Prostate gland (tissue), 2 donors: ENCODE measurements at regions of chr1 and their contacts with region 1.

Region 1: DNA sequence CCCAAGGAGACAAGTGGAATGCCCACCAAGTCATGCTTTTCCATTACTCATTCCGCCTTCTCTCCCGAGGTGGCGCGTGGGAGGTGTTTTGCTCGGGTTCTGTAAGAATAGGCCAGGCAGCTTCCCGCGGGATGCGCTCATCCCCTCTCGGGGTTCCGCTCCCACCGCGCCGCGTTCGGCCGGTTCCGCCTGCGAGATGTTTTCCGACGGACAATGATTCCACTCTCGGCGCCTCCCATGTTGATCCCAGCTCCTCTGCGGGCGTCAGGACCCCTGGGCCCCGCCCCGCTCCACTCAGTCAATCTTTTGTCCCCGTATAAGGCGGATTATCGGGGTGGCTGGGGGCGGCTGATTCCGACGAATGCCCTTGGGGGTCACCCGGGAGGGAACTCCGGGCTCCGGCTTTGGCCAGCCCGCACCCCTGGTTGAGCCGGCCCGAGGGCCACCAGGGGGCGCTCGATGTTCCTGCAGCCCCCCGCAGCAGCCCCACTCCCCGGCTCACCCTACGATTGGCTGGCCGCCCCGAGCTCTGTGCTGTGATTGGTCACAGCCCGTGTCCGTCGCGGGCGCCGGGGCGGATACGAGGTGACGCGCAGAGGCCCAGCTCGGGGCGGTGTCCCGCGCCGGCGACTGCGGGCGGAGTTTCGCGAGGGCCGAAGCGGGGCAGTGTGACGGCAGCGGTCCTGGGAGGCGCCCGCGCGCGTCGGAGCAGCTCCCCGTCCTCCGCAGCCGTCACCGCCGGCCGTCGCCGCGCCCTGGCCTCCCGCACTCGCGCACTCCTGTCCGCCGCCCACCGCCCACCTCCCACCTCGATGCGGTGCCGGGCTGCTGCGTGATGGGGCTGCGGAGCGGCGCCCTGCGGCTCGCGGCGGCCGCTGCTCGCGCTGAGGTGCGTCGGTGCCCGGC is at the start of gene KIF1B:
- DNase-seq: peak; percentile 99
- H3K4me3 ChIP-seq: peak within 1 kb of the TSS; percentile 87 to 93
- H3K27ac ChIP-seq: peak within 1 kb of the TSS; percentile 96 to 99
- H3K4me1 ChIP-seq: peaks cover 3% of the 10 kb centered on the region
- H3K27me3 ChIP-seq: no peaks in the 10 kb centered on the region
- CTCF ChIP-seq: peak; percentile 99 to 100 (median 99)
- POLR2A ChIP-seq: peak; percentile 100
- total RNA-seq, gene KIF1B: 31.3 to 56.8 TPM

Region 2: DNA sequence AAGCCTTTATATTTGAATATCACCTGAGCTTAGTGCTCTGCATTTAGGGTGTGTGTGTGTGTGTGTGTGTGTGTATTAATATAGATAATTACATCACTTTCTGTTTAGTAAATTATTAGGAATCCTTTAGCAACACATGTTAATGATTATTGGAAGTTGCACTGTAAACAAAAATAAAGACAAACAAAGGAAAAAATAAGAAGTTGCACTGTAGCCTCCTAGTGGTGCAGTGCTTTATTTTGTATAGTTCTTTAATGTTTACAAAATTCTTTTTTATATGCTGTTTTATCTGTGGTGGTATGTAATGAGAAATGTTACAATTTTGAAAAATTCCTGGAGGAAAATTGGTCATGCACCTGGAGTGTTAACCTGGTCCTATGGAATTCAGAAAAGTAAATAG is 108.2 kb before region 1 on chr1:
- intact Hi-C with region 1: no loop called
- DNase-seq: no peak
- H3K4me3 ChIP-seq: no peak overlapping the region
- H3K27ac ChIP-seq: no peak overlapping the region
- H3K4me1 ChIP-seq: peaks cover 6% of the 10 kb centered on the region
- H3K27me3 ChIP-seq: no peaks in the 10 kb centered on the region
- CTCF ChIP-seq: peak in 1 of 4 experiments; percentile 17
- POLR2A ChIP-seq: no peak

Region 3: DNA sequence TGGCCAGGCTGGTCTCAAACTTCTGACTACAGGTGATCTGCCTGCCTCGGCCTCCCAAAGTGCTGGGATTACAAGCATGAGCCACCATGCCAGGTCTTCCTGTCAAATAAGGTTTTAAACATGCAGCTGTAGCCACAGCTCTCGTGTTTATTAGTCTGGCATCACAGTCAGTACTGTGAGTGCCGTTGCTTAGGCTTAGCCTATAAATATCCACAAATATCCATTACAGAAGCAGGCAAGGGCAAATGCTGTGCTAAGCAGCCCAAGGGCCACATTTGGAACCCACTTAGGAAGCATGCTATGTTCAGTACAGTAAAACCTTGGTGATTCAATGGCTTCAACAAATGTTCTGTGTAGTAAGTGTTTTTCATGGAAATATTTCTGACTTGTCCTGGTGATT is 76.1 kb after region 1 on chr1:
- intact Hi-C with region 1: loop called (anchors 5 kb)
- DNase-seq: peak; percentile 12
- H3K4me3 ChIP-seq: no peak overlapping the region
- H3K27ac ChIP-seq: peak overlapping the region in 1 of 2 donors; percentile 25
- H3K4me1 ChIP-seq: no peaks in the 10 kb centered on the region
- H3K27me3 ChIP-seq: no peaks in the 10 kb centered on the region
- CTCF ChIP-seq: no peak
- POLR2A ChIP-seq: no peak

Region 4: GRCh38 chr1:10308001-10308400 is 97.8 kb after region 1 on chr1:
- intact Hi-C with region 1: no loop called
- DNase-seq: no peak
- H3K4me3 ChIP-seq: no peak overlapping the region
- H3K27ac ChIP-seq: no peak overlapping the region
- H3K4me1 ChIP-seq: no peaks in the 10 kb centered on the region
- H3K27me3 ChIP-seq: no peaks in the 10 kb centered on the region
- CTCF ChIP-seq: no peak
- POLR2A ChIP-seq: no peak

Region 5: GRCh38 chr1:10338047-10338446 is 127.9 kb after region 1 on chr1:
- intact Hi-C with region 1: loop called (anchors 1 kb)
- DNase-seq: no peak
- H3K4me3 ChIP-seq: no peak overlapping the region
- H3K27ac ChIP-seq: no peak overlapping the region
- H3K4me1 ChIP-seq: no peaks in the 10 kb centered on the region
- H3K27me3 ChIP-seq: no peaks in the 10 kb centered on the region
- CTCF ChIP-seq: peak in 3 of 4 experiments; percentile 36 to 62 (median 56)
- POLR2A ChIP-seq: no peak